ENCODE measurements at regions of chr4 and their contacts with region 1.

Region 1: DNA sequence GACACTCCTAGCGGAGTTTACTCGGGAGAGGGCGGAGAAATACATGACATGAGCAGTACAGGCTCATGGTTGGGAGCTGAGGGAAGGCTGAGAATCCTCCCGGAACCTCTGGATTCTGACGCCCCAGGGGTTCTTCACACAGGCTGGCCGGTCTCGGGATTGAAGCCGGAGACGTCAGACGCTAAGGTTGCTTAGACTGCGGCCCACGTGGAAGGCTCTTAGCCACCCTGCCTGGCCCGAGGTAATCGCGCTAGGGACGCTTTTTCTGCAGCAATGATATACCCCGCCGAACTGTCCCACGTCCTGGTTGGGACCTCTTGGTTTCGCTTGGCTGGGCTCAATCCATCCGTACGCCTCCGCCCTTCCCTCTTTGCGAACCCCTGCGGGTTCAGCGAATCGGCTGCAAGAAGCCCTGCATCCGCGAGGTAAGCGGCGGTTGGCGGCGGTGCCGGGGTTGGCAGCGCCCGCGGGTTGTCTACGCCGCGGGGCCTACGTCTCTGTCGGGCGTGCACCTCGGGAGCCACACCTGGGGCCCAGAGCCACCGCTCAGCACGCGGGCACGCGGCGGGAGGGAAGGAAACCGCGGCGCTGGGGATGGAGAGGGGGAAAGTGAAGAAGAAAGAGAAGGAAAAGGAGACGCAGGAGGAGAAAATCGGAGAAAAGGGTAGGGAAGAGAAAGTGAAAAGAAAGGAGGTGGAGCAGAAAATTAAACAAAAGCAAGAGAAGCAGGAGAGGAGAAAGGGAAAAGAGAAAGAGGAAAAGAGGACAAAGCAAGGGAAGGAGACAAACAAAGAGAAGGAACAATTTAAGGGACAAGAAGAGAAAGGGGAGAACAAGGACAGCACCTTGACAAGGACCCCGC is at the start of gene ARL9:
- DNase-seq: peak; percentile 87
- H3K4me3 Mint-ChIP-seq: peak within 1 kb of the TSS; percentile 87
- H3K27ac Mint-ChIP-seq: peak within 1 kb of the TSS; percentile 60
- H3K4me1 Mint-ChIP-seq: peaks cover 15% of the 10 kb centered on the region
- H3K27me3 Mint-ChIP-seq: peaks cover 13% of the 10 kb centered on the region
- total RNA-seq, gene ARL9: 0.07 TPM in 1 of 2 replicates, not detected in the other

Region 2: DNA sequence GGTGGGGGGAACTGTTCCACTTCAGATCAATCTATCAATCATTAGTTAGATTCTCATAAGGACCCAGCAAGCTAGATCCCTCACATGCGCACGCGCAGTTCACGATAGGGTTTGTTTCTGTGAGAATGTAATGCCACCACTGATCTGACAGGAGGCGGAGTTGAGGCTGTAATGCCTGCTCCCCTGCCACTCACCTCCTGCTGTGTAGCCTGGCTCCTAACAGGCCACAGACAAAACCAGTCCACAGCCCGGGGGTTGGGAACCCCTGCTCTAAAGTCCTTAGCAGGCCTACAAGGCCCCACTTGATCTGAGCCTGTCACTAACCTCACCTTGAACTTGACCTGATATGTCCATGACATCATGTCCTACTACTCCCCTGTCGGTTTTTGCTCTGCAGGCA is 30.4 kb after region 1 on chr4:
- intact Hi-C with region 1: no loop called
- DNase-seq: no peak
- H3K4me3 Mint-ChIP-seq: no peak overlapping the region
- H3K27ac Mint-ChIP-seq: no peak overlapping the region
- H3K4me1 Mint-ChIP-seq: no peaks in the 10 kb centered on the region
- H3K27me3 Mint-ChIP-seq: peaks cover 11% of the 10 kb centered on the region

Region 3: DNA sequence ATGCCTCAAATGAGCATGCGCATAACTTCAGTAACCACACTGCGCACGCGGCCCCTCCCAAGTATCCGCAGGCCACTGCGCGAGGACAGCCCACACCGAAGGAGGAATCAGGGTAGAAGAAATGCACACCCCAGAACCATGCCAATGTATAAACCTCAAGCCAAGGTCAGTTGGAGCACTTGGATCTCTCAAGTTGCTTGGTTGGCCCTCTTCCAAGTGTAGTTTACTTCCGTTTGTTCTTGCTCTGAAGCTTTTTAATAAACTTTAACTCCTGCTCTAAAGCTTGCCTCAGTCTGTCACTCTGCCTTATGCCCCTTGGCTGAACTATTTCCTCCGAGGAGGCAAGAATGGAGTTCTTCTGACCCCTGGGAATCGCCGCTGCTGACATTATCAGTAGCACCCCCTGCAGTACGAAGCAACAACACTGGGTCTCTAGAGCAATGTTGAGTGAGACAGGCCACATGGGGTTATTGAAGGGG is 338.0 kb after region 1 on chr4:
- intact Hi-C with region 1: loop called (anchors 5 kb)
- DNase-seq: no peak
- H3K4me3 Mint-ChIP-seq: no peak overlapping the region
- H3K27ac Mint-ChIP-seq: no peak overlapping the region
- H3K4me1 Mint-ChIP-seq: no peaks in the 10 kb centered on the region
- H3K27me3 Mint-ChIP-seq: no peaks in the 10 kb centered on the region

Measured in activated CD4-positive, alpha-beta T cell treated with anti-CD3 and anti-CD28 coated beads, Interleukin-2, amount 10 ng/mL, durations not matched to agents 24 days and 14 days (primary cell).